Aorta (tissue), 5 donors: ENCODE measurements at regions of chr17 and their contacts with region 1.

Region 1: DNA sequence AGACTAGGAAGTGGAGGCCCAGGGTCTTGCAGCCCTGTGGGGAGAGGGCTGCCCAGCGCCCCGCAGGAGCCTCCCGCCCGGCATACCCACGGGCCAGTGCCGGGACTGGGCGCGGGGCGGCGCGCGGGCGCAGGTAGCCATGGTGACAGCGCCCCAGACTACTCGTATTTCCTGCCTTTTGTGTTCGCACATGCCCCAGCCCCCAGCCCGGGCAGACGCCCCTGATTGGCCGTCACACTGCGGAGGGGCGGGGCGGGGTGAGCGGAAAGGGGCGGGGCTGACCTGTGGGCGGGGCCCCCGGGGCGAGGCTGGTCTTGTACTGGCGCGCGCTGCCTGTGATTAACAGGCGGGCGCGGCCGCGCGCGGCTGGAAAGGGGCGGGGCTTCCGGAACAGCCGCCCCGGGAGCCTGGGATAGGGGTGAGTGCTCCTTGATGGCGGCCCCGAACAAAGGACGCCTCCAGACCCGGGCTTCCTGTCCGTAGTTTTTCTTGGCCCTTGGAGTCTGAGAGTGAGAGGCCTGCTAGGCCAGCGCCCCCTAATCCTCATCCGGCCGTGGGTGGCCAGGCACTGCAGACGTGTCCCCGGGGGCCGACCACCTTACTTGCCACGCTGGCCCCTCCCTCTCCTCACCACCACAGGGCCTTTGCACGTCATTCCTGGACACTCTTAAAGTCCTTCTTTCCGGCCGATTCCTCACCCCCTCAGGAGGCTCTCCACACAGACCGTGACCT is 71.0 kb downstream of the RAI1 start:
- DNase-seq: peak; percentile 97 to 99
- ATAC-seq: peak; percentile 98
- H3K4me3 ChIP-seq: peak overlapping the region; percentile 35 to 44
- H3K27ac ChIP-seq: peak overlapping the region in 1 of 2 donors; percentile 16
- H3K4me1 ChIP-seq: no peaks in the 10 kb centered on the region
- H3K27me3 ChIP-seq: no peaks in the 10 kb centered on the region

Region 2: GRCh38 chr17:17712268-17712924 is 39.9 kb before region 1 on chr17:
- intact Hi-C with region 1: loop called in 1 of 2 experiments (anchors 5 kb)
- DNase-seq: no peak
- ATAC-seq: no peak
- H3K4me3 ChIP-seq: no peak overlapping the region
- H3K27ac ChIP-seq: no peak overlapping the region
- H3K4me1 ChIP-seq: no peaks in the 10 kb centered on the region
- H3K27me3 ChIP-seq: no peaks in the 10 kb centered on the region

Region 3: DNA sequence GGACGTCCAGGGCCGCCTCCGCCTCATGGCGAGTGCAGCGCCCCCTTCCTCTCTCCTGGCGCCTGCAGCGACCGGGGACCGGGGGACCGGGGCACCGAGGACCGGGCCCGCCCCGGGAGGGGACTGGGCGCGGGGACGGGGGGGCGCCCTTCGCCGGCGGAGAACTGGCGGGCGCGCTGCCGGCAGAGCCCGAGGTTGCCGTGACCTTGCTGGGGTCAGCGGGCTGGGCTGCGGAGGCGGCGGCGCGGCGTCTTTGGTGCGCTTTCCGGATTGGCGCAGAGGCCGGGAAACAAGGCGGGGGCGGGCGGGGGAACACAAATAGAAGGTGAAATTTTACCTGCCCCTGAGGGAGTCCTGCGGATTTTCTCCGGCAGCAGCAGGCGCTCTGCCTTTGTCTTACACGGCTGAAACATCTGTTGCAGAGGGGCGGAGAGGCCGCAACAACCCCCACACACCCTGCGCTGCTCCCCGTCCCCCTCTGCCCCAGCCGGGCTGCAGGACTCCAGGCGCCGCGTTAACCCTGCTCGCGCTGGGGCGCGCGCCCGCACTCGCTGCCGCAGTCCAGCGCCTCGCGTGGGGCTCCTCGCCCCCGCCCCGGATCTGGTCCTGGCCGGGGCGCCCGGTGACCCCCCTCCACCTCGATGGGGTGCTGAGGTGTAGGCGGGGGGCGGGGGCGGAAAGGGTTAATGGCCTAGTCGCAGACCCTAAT is 31.0 kb after region 1 on chr17:
- intact Hi-C with region 1: loop called in 1 of 2 experiments (anchors 2 kb)
- DNase-seq: peak in 1 of 2 donors; percentile 85
- ATAC-seq: peak; percentile 17
- H3K4me3 ChIP-seq: peak overlapping the region; percentile 9 to 52
- H3K27ac ChIP-seq: no peak overlapping the region
- H3K4me1 ChIP-seq: no peaks in the 10 kb centered on the region
- H3K27me3 ChIP-seq: no peaks in the 10 kb centered on the region